ENCODE measurements at regions of chr9 and their contacts with region 1.

Region 1: GRCh38 chr9:109086242-109086641 is 33.5 kb downstream of the TMEM245 start:
- DNase-seq: no peak
- ATAC-seq: peak; percentile 32; the same call in 1 of the 3 replicates
- H3K4me3 ChIP-seq: no peak overlapping the region
- H3K27ac ChIP-seq: peak overlapping the region; percentile 18
- H3K4me1 ChIP-seq: peaks cover 73% of the 10 kb centered on the region
- H3K27me3 ChIP-seq: no peaks in the 10 kb centered on the region
- CTCF ChIP-seq: no peak
- EP300 ChIP-seq: no peak
- POLR2A ChIP-seq: no peak
- RAD21 ChIP-seq: no peak

Region 2: DNA sequence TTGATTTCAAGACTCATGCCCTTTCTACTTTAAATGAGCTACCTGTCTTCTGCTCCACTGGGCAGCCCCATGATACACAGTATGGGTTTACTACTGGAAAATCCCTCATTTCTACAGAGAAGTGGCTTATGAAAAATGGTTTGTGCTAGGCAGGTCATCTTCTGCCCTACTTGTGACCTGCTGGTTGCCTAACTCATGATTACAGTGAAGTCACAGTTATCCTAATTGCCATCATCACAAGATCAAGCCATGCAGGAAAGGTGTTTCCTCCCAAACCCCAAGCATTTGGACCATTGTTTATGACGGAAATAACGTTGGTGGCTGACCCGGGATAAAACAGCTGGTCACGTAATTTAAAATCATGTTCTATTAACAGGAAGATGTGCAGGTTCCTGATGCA is 561.1 kb before region 1 on chr9:
- CTCF ChIA-PET with region 1: no interaction called
- POLR2A ChIA-PET with region 1: no interaction called
- in situ Hi-C with region 1: no loop called
- intact Hi-C with region 1: no loop called
- DNase-seq: no peak
- ATAC-seq: no peak
- H3K4me3 ChIP-seq: no peak overlapping the region
- H3K27ac ChIP-seq: no peak overlapping the region
- H3K4me1 ChIP-seq: no peaks in the 10 kb centered on the region
- H3K27me3 ChIP-seq: no peaks in the 10 kb centered on the region; a peak in 1 of 5 replicates
- CTCF ChIP-seq: no peak
- EP300 ChIP-seq: no peak
- POLR2A ChIP-seq: no peak
- RAD21 ChIP-seq: no peak

Region 3: GRCh38 chr9:109035684-109036423 is 50.4 kb before region 1 on chr9:
- CTCF ChIA-PET with region 1: no interaction called
- POLR2A ChIA-PET with region 1: no interaction called
- in situ Hi-C with region 1: no loop called
- intact Hi-C with region 1: loop called (anchors 5 kb)
- DNase-seq: peak; percentile 90
- ATAC-seq: peak; percentile 86
- H3K4me3 ChIP-seq: no peak overlapping the region
- H3K27ac ChIP-seq: peak overlapping the region; percentile 63
- H3K4me1 ChIP-seq: peaks cover 46% of the 10 kb centered on the region
- H3K27me3 ChIP-seq: no peaks in the 10 kb centered on the region
- CTCF ChIP-seq: no peak
- EP300 ChIP-seq: peak in 1 of 2 experiments; percentile 79; a peak in 2 of 4 replicates
- POLR2A ChIP-seq: no peak
- RAD21 ChIP-seq: no peak

Region 4: DNA sequence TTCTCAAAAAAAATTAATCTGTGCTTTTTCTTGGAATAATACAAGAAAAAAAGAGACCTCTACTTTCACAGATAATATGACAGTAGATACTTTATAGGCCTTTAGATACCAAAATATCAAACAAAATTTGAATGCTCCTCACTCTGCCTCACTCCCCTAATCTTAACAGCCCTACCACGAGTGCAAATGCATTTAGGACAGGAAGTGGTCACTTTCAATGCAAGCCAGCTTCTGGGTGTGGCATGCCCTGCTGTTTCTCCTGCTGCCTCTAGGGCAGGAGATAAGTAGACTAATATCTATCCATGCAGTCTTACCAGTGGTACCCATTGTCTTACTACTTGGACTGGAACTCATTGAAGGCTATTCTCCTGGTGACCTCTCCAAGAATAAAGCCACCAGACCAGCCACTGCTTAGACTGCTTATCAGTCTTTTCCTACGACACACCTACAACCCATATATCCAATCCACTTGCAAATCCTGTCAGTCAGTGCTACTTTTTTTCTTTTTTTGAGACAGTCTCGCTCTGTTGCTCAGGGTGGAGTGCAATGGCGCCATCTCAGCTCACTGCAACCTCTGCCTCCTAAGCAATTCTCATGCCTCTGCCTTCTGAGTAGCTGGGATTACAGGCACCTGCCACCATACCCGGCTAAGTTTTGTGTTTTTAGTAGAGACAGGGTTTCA is 57.8 kb after region 1 on chr9:
- CTCF ChIA-PET with region 1: no interaction called
- POLR2A ChIA-PET with region 1: no interaction called
- in situ Hi-C with region 1: loop called (anchors 10 kb)
- intact Hi-C with region 1: no loop called
- DNase-seq: peak; percentile 29
- ATAC-seq: peak; percentile 92
- H3K4me3 ChIP-seq: no peak overlapping the region
- H3K27ac ChIP-seq: no peak overlapping the region
- H3K4me1 ChIP-seq: peaks cover 21% of the 10 kb centered on the region
- H3K27me3 ChIP-seq: peaks cover 0 to 4% of the 10 kb centered on the region in 2 experiments; a peak in 1 of 5 replicates
- CTCF ChIP-seq: no peak
- EP300 ChIP-seq: no peak
- POLR2A ChIP-seq: no peak
- RAD21 ChIP-seq: no peak

Measured in HepG2 (cell line).